ENCODE measurements at regions of chr10 and their contacts with region 1.

Region 1: DNA sequence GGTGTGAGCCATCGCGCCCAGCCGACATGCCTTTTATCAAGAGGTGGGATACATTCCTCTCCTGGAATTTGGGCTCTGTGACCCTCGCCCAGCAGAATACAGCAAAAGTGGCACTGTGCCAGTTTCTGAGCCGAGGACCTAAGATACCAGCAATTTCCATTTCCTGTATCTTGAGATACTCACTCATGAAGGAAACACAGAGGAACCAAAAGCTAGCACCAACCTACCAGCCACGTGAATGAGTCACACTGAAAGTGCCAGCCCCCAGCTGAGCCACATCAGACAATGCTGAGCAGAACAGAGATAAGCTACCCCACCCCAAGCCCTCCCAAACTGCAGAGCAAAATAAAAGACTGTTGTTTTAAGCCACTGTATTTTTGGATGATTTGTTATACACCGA is 56.3 kb downstream of the CACUL1 start:
- DNase-seq: no peak
- ATAC-seq: peak in 2 of 8 donors; percentile 30 to 47
- H3K4me3 ChIP-seq: no peak overlapping the region
- H3K27ac ChIP-seq: no peak overlapping the region
- H3K4me1 ChIP-seq: peaks cover 0 to 12% (median 0%) of the 10 kb centered on the region in 9 donors
- H3K27me3 ChIP-seq: no peaks in the 10 kb centered on the region
- CTCF ChIP-seq: no peak

Region 2: DNA sequence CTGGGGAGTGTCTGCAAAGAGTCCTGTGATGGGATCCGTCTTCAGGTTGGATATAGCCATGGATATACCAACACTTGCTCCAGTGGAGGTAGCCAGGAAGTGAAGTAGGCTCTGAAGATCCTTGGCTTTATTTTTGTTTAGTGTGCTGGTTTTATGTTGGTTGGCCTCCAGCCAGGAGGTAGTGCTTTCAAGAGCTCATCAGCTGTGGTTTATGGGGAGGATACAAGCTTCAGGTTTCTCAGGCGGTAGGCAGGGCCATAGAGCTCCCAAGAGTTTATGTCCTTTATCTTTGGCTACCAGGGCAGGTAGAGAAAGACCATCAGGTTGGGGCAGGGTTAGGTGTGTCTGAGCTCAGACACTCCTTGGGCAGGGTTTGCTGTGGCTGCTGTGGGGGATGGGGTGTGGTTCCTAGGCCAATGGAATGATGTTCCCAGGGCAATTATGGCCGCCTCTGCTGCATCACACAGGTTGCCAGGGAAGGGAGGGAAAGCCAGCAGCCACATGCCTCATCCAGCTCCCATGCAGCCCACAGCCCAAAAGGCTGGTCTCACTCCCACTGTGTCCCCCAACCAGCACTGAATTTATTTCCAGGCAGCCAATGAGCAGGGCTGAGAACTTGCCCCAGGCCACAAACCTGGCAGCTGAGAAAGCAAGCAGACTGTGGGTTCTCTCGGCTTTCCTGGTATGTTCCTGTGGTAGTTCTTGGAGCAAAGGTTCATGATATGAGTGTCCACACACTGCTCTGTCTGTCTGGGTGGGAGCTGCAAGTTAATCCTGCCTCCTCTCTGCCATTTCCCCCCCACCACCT is 36.0 kb before region 1 on chr10:
- intact Hi-C with region 1: loop called in 1 of 10 experiments (anchors 2 kb)
- DNase-seq: no peak
- ATAC-seq: no peak
- H3K4me3 ChIP-seq: no peak overlapping the region
- H3K27ac ChIP-seq: no peak overlapping the region
- H3K4me1 ChIP-seq: no peaks in the 10 kb centered on the region
- H3K27me3 ChIP-seq: peaks cover 0 to 28% (median 10%) of the 10 kb centered on the region in 7 donors
- CTCF ChIP-seq: no peak

Region 3: DNA sequence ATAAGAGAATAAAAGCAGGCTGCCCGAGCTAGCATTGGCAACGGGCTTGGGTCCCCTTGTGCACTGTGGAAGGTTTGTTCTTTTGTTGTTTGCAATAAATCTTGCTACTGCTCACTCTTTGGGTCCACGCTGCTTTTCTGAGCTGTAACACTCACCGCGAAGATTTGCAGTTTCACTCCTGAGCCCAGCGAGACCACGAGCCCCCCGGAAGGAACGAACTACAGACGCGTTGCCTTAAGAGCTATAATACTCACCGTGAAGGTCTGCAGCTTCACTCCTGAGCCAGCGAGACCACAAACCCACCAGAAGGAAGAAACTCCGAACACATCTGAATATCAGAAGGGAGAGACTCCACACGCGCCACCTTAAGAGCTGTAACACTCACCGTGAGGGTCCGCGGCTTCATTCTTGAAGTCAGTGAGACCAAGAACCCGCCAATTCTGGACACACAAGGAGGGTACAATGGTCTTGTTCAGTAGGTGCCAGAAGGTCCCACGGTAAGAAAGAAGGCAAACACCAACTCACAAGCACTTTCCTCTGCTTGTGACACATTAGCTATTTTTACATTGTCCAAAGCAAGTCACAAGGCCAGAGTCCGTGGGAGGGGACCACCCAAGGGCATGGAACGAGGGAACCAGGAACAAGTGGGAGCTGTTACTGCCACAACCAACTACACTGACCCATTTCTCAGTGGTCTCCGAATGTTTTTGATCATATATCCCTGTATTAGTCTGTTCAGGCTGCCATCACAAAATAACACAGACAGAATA is 85.5 kb after region 1 on chr10:
- intact Hi-C with region 1: no loop called
- DNase-seq: no peak
- ATAC-seq: no peak
- H3K4me3 ChIP-seq: no peak overlapping the region
- H3K27ac ChIP-seq: no peak overlapping the region
- H3K4me1 ChIP-seq: no peaks in the 10 kb centered on the region
- H3K27me3 ChIP-seq: peaks cover 0 to 17% (median 4%) of the 10 kb centered on the region in 7 donors
- CTCF ChIP-seq: no peak

Region 4: GRCh38 chr10:118882741-118883140 is 184.3 kb after region 1 on chr10:
- intact Hi-C with region 1: no loop called
- DNase-seq: no peak
- ATAC-seq: no peak
- H3K4me3 ChIP-seq: no peak overlapping the region
- H3K27ac ChIP-seq: no peak overlapping the region
- H3K4me1 ChIP-seq: no peaks in the 10 kb centered on the region
- H3K27me3 ChIP-seq: no peaks in the 10 kb centered on the region
- CTCF ChIP-seq: no peak